ENCODE measurements at regions of chr14 and their contacts with region 1.

Region 1: GRCh38 chr14:59428581-59429012 is 36.6 kb downstream of the GPR135 start:
- H3K4me3 Mint-ChIP-seq: no peak overlapping the region
- H3K27ac Mint-ChIP-seq: peak overlapping the region; percentile 91
- H3K4me1 Mint-ChIP-seq: peaks cover 53% of the 10 kb centered on the region
- H3K27me3 Mint-ChIP-seq: no peaks in the 10 kb centered on the region

Region 2: DNA sequence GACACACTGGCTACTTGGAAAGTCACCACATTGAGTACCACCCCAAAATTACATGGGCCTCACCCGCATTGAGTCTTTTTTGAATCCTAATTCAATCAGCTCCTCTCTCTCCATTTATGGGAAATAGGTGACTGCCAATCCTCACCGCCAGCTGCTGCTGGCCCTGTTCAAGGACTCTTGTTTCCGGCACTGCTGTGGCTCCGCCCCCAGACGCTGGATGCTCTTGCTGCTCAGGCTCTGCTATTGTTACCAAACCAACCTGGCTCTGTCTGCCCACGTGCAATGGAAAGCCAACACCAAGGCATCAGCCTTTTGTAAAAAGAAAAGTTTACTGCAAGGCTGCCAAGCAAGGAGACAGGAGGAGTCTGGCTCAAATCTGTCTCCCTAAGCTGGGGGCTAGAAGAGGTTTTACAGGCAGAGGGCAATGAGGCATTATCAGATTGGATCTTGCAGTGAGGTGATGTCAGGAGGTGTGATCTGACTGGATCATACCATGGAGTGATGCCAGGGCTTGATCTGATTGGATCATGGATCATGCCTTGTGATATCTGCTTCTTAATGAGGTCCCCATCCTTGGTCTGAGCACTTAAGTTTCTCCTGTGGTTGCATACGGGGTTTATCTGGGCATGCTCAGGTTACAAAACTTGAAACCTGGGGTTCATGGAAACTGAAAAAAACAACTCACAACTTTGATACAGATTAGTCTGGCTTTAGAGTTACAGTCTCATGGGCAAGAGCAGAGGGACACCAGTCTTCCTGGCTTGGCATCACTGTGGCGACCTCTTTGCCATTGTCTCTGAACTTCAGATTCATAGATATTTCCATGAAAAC is 1445.6 kb before region 1 on chr14:
- intact Hi-C with region 1: no loop called
- H3K4me3 Mint-ChIP-seq: no peak overlapping the region
- H3K27ac Mint-ChIP-seq: no peak overlapping the region
- H3K4me1 Mint-ChIP-seq: no peaks in the 10 kb centered on the region
- H3K27me3 Mint-ChIP-seq: no peaks in the 10 kb centered on the region

Region 3: DNA sequence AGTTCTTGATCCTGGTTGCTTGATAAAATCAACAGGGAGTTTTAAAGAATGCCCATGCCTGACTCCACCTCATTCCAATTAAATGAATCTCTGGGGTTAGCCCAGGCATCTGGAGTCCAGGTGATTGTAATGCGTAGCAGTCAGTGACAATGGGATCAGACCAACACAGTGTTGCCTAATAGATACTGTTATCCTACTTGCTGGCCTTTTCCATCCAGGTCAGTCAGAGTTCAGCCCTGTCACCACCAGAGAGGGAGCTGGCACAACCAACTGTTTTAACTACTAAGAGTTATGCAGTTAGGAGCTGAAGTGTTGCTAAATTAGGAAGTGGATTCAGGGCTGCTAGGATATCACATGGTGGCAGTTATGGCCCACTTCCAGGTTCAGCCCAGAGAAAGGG is 70.5 kb before region 1 on chr14:
- intact Hi-C with region 1: loop called (anchors 10 kb)
- H3K4me3 Mint-ChIP-seq: no peak overlapping the region
- H3K27ac Mint-ChIP-seq: no peak overlapping the region
- H3K4me1 Mint-ChIP-seq: peaks cover 31% of the 10 kb centered on the region
- H3K27me3 Mint-ChIP-seq: no peaks in the 10 kb centered on the region

Region 4: DNA sequence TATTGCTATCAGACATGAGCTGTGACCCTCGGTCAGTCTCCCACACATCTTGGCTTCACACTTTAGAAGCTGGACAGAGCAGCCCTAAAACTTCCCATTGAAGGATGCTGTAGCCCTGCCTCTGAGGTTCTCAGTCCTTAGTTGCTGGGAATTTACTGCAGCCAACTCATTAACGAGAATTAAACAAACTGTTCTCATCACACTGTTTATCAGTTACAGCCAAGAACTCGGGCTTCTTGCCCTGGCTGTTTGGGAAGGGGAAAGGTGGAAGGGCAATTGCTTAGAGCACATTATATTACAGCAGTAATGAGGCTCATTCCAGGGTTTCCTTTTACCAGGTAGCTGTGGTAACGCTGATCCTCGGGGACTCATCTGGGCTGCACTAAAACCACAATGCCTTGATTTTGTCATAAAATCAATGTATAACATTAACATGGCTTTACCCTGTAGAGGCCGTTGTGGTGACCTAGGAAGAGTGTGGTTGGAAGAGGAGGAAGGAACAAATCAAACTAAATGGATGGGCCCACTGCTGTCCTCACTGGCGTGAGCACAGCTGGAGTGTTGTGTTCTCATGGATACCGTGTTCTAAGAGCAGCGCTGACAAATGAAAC is 50.5 kb before region 1 on chr14:
- intact Hi-C with region 1: no loop called
- H3K4me3 Mint-ChIP-seq: no peak overlapping the region
- H3K27ac Mint-ChIP-seq: no peak overlapping the region
- H3K4me1 Mint-ChIP-seq: peaks cover 16% of the 10 kb centered on the region
- H3K27me3 Mint-ChIP-seq: no peaks in the 10 kb centered on the region

Measured in dendritic cell treated with granulocyte-macrophage colony-stimulating factor and Interleukin-4, amounts not matched to agents 40 ng/mL and 50 ng/mL, for 4 days (primary cell).